Posterior vena cava (tissue), 2 donors: ENCODE measurements at regions of chr5 and their contacts with region 1.

Region 1: DNA sequence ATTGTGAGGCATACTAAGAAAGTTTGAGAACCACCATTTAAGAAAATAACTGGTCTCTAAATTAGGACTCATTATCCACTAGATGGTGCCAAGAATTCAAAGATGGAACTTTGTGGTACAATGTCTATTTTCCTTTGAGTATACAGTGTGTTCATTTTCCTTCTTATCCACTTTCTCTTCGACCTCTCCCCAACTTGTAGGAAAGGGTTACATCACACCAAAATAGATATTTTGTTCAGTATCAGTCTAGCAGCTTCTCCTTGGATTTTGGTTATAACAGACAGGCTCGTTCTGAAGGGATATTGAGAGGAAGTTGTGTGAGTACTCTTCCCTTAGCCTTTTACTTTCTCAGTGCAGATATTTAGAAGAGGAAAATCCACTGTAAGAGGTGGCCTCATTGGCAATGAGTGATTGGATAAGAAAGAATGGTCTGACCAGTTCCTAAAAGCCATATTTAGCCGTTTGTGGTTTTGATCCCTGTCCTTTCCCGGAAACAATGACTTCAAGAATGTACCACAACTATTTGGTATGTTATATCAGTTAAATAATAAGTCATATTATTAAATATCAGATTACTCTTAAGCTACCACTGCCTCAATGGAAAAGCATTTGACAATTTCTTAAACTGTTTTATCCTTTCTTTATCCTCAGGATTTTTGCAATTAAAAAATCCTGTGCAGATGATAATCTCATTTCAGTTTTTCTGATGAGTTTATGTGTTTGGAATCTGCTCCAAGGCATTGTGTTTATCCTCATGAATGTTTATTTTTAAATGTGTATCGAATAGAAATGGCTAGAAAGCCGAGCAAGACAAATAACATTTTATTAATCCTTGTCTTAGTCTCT is 69.0 kb upstream of the GRAMD2B start:
- DNase-seq: no peak

Region 2: DNA sequence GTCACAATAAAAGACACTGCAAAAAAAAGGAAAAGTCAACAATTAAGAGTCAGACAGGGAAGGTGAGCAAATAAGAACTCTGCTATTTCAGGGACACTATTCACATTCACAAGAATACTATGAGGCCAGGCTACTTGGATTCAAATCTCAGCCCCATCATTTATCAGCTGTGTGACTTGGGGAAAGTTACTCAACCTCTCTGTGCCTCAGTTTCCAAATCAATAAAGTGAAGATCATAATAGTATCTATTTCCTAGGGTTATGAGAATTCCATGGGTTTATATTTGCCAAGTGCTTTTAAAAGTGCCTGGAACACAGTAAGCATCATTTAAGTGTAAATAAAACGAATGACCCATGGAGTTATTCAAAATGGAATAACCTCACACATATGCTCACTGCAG is 184.3 kb after region 1 on chr5:
- intact Hi-C with region 1: loop called (anchors 2 kb)
- DNase-seq: no peak